GM12878 (cell line): ENCODE measurements at regions of chr15 and their contacts with region 1.

Region 1: DNA sequence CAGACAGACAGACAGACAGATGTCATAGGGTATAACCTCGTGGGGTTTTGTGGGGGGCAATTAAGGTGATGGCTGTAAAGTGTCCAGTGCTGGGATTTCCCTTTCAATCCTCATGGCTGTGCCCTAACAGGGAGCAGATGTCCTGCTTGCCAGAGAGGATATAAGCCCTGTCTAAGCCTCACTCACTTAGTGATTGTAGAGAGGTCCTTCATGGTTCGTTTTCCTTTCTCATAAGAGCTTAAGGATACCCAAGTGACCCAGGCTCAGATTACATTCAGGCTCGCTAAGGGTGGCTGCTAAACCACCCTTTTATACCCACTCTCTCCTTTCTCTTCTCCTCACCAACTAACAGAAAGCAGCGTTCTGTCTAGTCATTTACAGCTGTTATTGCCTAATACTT is 19.2 kb downstream of the LYSMD2 start:
- DNase-seq: no peak
- ATAC-seq: no peak
- H3K4me3 ChIP-seq: no peak overlapping the region
- H3K27ac ChIP-seq: no peak overlapping the region
- H3K4me1 ChIP-seq: no peaks in the 10 kb centered on the region
- H3K27me3 ChIP-seq: no peaks in the 10 kb centered on the region
- CTCF ChIP-seq: no peak
- EP300 ChIP-seq: no peak
- POLR2A ChIP-seq: no peak
- RAD21 ChIP-seq: no peak

Region 2: DNA sequence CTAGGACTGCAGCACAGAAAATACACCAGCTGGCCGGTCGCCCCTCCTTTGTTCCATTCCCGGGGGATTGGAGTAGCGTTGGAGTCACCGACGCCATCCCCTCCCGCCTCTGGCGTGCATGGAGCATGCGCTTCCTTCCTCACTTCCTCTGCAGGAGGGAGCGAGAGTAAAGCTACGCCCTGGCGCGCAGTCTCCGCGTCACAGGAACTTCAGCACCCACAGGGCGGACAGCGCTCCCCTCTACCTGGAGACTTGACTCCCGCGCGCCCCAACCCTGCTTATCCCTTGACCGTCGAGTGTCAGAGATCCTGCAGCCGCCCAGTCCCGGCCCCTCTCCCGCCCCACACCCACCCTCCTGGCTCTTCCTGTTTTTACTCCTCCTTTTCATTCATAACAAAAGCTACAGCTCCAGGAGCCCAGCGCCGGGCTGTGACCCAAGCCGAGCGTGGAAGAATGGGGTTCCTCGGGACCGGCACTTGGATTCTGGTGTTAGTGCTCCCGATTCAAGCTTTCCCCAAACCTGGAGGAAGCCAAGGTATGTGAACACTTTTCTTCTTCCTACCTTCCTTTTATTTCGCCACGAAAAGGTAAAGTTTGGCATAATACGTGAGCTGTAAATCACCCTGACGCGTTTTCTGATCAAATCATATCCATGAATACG is 36.8 kb before region 1 on chr15 and contains the start of gene SCG3:
- CTCF ChIA-PET with region 1: no interaction called
- POLR2A ChIA-PET with region 1: no interaction called
- RAD21 ChIA-PET with region 1: no interaction called
- SMC1A ChIA-PET with region 1: no interaction called
- in situ Hi-C with region 1: no loop called
- intact Hi-C with region 1: loop called (anchors 5 kb)
- DNase-seq: no peak
- ATAC-seq: peak; percentile 51
- H3K4me3 ChIP-seq: no peak within 1 kb of the TSS
- H3K27ac ChIP-seq: no peak within 1 kb of the TSS
- H3K4me1 ChIP-seq: no peaks in the 10 kb centered on the region
- H3K27me3 ChIP-seq: peaks cover 0 to 3% of the 10 kb centered on the region in 2 experiments; a peak in 1 of 4 replicates
- CTCF ChIP-seq: no peak
- EP300 ChIP-seq: no peak
- POLR2A ChIP-seq: no peak
- RAD21 ChIP-seq: no peak
- polyA plus RNA-seq, gene SCG3: not detected